Heart right ventricle (tissue), 16 donors: ENCODE measurements at regions of chr15 and their contacts with region 1.

Region 1: DNA sequence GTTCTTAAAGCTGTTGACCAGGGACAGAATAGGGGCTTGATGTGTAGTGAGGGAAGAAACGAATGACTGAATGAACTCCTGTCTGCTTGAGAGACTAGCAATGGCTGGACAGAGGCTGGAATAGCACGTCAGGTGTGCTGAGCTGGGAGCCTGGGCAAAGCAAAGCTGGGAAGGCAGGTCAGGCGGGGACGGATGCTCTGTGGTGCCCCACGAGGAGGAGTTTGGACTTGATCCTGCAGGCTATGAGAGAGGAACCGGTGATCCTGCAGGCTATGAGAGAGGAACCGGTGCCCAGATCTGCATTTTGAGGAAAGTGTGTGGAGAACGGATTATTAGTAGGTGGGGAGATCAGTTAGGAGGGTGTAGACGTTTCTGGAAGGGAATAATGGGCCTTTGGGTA is 31.3 kb upstream of the PSTPIP1 start:
- DNase-seq: no peak
- ATAC-seq: peak in 5 of 8 donors; percentile 14 to 67 (median 48)
- H3K4me3 ChIP-seq: no peak overlapping the region
- H3K27ac ChIP-seq: peak overlapping the region in 2 of 10 donors; percentile 13 to 36
- H3K4me1 ChIP-seq: peaks cover 0 to 52% (median 30%) of the 10 kb centered on the region in 9 donors
- H3K27me3 ChIP-seq: no peaks in the 10 kb centered on the region
- CTCF ChIP-seq: no peak

Region 2: DNA sequence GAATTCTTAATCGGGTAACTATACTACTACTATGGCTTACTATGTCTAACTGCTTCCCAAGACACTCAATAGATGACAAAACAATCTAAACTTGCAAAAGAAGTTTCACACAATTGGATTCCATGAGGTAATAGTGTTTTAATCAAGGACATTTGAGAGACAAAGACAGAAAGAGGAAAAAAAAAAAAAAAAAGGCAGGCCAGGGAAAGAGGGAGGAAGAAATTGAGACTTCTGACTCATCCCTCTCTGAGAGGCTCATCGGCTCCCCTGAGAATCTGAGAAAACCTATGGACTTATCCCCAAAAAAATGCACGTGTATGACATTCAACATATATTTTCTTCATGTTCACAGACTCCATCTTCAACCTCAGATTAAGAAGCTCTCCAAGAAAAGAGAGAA is 119.5 kb before region 1 on chr15:
- intact Hi-C with region 1: no loop called
- DNase-seq: no peak
- ATAC-seq: no peak
- H3K4me3 ChIP-seq: no peak overlapping the region
- H3K27ac ChIP-seq: no peak overlapping the region
- H3K4me1 ChIP-seq: peaks cover 0 to 11% (median 7%) of the 10 kb centered on the region in 9 donors
- H3K27me3 ChIP-seq: no peaks in the 10 kb centered on the region
- CTCF ChIP-seq: no peak

Region 3: DNA sequence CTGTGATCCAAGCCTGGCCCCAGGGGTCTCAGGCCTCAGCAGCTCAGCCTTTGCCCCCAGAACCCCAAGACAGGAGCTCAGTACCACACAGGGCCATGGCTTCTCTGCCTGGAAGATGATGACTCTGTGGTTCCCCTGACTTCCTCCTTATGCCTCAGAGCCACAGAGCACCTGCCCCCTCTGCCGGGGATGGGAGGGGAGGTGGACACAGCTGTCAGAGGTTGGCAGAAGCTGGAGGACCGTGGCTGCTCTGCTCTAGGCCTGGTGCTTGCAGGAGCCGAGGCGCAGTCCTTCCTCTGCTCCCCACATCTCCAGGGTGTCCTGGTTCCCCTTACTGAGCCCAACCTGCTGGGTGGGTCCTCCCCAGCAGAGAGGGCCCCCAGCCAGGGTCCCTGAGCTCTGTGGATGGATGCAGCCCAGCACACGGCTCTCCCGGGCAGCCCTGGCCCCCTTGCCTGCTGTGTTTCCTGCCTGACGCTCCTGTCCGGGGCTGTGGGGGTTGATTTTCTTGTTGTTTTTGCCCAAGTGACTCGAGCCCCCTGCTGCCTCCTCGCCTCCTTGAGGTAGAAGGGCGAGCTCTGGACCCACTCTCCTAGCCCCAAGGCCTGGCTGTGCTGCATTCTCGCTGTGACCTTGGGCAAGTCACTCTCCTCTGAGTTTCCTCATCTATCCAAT is 67.9 kb after region 1 on chr15:
- intact Hi-C with region 1: no loop called
- DNase-seq: no peak
- ATAC-seq: no peak
- H3K4me3 ChIP-seq: no peak overlapping the region
- H3K27ac ChIP-seq: no peak overlapping the region
- H3K4me1 ChIP-seq: peaks cover 0 to 22% (median 6%) of the 10 kb centered on the region in 9 donors
- H3K27me3 ChIP-seq: peaks cover 0 to 10% (median 0%) of the 10 kb centered on the region in 7 donors
- CTCF ChIP-seq: no peak

Region 4: GRCh38 chr15:77107531-77108355 is 144.1 kb after region 1 on chr15:
- intact Hi-C with region 1: loop called in 1 of 10 experiments (anchors 10 kb)
- DNase-seq: peak; percentile 51 to 65
- ATAC-seq: peak; percentile 46 to 82 (median 76)
- H3K4me3 ChIP-seq: no peak overlapping the region
- H3K27ac ChIP-seq: peak overlapping the region in 8 of 10 donors; percentile 4 to 73 (median 61)
- H3K4me1 ChIP-seq: peaks cover 20 to 74% (median 36%) of the 10 kb centered on the region in 9 donors
- H3K27me3 ChIP-seq: no peaks in the 10 kb centered on the region
- CTCF ChIP-seq: peak; percentile 39 to 77 (median 62)